ENCODE measurements at regions of chrX and their contacts with region 1.

Region 1: DNA sequence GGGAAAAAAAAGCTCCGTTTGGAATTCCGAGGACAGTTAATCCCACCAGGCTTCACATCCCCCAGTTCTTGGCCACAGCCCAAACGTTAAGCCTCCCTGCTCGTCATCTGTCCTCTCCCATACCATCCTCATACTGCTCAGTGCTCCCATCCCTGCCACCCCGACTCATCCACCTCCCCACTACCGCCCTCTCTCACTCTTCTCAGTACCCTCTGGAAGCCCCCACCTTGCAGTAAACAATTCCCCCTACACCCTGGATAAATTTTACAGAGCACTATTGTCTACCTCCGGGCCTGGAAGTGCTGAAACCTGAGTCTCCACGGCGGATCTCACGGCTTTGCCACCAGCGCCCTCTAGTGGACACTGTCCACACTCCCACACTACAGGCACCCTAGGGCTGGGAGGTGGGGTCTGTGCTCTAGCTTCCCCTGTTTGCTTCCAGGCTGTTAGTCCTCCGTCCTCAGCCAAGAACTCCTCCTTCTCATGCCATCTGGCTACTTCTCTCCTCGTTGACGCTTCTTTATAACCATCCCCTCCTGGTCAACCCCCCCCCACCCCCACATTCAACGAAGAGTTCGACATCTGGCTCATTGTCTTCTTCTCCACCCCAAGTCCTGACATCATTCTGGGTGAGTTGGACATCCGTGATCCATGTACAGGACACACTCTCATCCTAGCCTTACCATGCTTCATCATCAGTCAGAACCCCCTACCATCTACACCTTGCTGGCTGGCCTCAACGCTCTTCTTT is 54.5 kb downstream of the RTL9 start:
- DNase-seq: peak; percentile 65 to 79 (median 74)
- ATAC-seq: peak; percentile 93
- H3K4me3 ChIP-seq: no peak overlapping the region
- H3K27ac ChIP-seq: no peak overlapping the region
- H3K4me1 ChIP-seq: no peaks in the 10 kb centered on the region
- H3K27me3 ChIP-seq: peaks cover 0 to 8% of the 10 kb centered on the region in 2 donors
- CTCF ChIP-seq: peak; percentile 74 to 84

Region 2: GRCh38 chrX:110156167-110156754 is 256.9 kb before region 1 on chrX:
- intact Hi-C with region 1: loop called (anchors 5 to 10 kb)
- DNase-seq: no peak
- ATAC-seq: no peak
- H3K4me3 ChIP-seq: no peak overlapping the region
- H3K27ac ChIP-seq: no peak overlapping the region
- H3K4me1 ChIP-seq: peaks cover 0 to 10% of the 10 kb centered on the region in 2 donors
- H3K27me3 ChIP-seq: no peaks in the 10 kb centered on the region
- CTCF ChIP-seq: peak; percentile 50 to 54

Region 3: GRCh38 chrX:110163488-110163887 is 249.7 kb before region 1 on chrX:
- intact Hi-C with region 1: loop called (anchors 5 to 10 kb)
- DNase-seq: no peak
- ATAC-seq: peak; percentile 59
- H3K4me3 ChIP-seq: no peak overlapping the region
- H3K27ac ChIP-seq: no peak overlapping the region
- H3K4me1 ChIP-seq: peaks cover 0 to 10% of the 10 kb centered on the region in 2 donors
- H3K27me3 ChIP-seq: no peaks in the 10 kb centered on the region
- CTCF ChIP-seq: no peak

Region 4: GRCh38 chrX:110600745-110601310 is 187.7 kb after region 1 on chrX:
- intact Hi-C with region 1: no loop called
- DNase-seq: no peak
- ATAC-seq: no peak
- H3K4me3 ChIP-seq: no peak overlapping the region
- H3K27ac ChIP-seq: no peak overlapping the region
- H3K4me1 ChIP-seq: no peaks in the 10 kb centered on the region
- H3K27me3 ChIP-seq: no peaks in the 10 kb centered on the region
- CTCF ChIP-seq: no peak

Measured in left lung (tissue), 14 donors.